ENCODE measurements at regions of chr6 and their contacts with region 1.

Region 1: DNA sequence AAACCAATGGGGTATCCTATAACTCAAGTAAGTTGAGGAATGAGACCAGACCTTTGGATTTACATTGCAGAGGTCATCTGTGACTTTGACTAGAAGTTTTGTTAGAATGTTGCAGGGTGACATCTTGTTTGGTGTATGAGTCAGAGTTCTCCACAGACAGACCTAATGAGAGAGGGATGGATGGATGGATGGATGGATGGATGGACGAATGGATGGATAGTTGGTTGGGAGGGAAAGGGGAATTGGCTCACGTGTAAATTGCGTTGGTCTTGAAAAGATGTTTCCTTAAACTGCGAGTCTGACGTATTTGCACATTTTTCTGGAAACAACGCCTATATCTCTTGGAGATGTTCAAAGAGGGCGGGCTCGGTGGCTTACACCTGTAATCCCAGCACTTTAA is 1.0 kb upstream of the MTRES1 start:
- DNase-seq: no peak
- ATAC-seq: no peak
- H3K4me3 ChIP-seq: no peak overlapping the region
- H3K27ac ChIP-seq: no peak overlapping the region
- H3K4me1 ChIP-seq: peaks cover 0 to 2% of the 10 kb centered on the region in 2 donors
- H3K27me3 ChIP-seq: no peaks in the 10 kb centered on the region

Region 2: GRCh38 chr6:106608062-106608668 is 418.8 kb before region 1 on chr6:
- intact Hi-C with region 1: no loop called
- DNase-seq: no peak
- ATAC-seq: no peak
- H3K4me3 ChIP-seq: no peak overlapping the region
- H3K27ac ChIP-seq: no peak overlapping the region
- H3K4me1 ChIP-seq: no peaks in the 10 kb centered on the region
- H3K27me3 ChIP-seq: no peaks in the 10 kb centered on the region

Region 3: DNA sequence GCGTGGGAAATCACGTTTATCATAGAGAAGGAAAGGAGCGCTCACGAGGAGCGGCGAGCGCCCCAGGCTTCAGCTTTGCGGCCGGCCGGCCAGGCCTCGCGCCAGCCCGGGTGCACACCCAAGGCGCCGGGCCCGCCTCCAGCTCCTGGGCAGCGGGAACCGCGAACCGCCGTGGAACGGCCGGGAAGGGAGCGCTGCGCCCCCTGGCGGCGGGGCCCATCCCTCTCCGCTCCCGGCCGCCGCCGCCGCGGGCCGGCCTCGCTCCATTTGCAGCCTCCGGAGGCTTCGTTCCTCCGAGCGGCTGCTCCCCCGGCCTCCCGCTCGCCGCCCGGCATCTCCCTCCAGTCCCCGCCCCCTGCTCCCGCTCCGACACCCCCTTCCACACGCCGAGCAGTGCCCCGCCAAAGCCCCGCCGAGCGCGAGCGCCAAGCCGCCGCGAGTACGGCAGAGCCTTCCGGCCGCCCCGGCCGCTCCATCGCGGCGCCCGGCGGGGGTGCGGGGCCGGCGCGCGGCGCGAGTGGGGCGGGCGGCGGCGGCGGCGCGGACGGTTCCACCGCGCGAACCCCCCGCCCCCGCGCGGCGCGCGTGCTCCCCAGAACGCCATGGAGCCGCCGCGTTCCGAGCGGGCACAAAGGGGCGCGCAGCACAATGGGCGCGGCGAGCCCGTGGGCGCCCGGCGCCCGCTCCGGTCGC is 87.4 kb after region 1 on chr6:
- intact Hi-C with region 1: loop called (anchors 5 kb)
- DNase-seq: peak; percentile 92 to 96
- ATAC-seq: peak; percentile 97
- H3K4me3 ChIP-seq: peak overlapping the region; percentile 92 to 99
- H3K27ac ChIP-seq: no peak overlapping the region
- H3K4me1 ChIP-seq: peaks cover 0 to 5% of the 10 kb centered on the region in 2 donors
- H3K27me3 ChIP-seq: no peaks in the 10 kb centered on the region